Endothelial cell of umbilical vein (primary cell): ENCODE measurements at regions of chr14 and their contacts with region 1.

Region 1: GRCh38 chr14:52729925-52730667 is at the start of gene STYX:
- DNase-seq: peak; percentile 99
- H3K4me3 ChIP-seq: peak within 1 kb of the TSS; percentile 50 to 98 (median 88)
- H3K27ac ChIP-seq: peak within 1 kb of the TSS; percentile 29
- H3K4me1 ChIP-seq: peaks cover 3% of the 10 kb centered on the region
- H3K27me3 ChIP-seq: no peaks in the 10 kb centered on the region
- CTCF ChIP-seq: no peak
- POLR2A ChIP-seq: peak; percentile 78
- total RNA-seq, gene STYX: 21.0 and 21.3 TPM in 2 replicates

Region 2: DNA sequence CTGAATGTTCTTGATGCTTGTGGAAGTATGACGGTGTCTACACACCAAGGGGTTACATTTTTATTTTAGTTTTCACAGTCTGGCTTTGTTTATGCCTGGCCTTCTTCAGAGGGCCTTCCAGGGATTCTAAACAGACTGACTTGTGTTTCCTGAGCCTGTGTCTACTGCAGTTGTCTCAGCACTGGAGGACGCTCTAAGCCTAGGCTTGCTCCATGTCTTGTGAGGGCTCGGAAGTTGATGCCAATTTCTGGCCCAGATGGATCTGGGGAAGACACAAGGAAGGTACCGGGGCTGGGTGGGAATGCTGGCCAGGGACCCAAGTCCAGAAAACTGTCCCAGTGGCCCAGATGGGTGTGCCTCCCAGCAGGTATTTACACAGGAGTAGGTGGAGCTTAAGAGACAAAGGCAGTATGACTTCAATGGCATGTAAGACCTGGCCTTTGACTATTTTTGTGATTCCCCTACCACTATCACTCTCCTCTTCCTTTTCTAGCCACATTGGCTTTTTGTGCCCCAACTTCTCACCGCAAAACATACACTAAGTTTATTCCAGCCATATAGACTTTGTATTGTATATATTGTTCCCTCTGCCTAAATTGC is 120.6 kb before region 1 on chr14:
- CTCF ChIA-PET with region 1: no interaction called
- POLR2A ChIA-PET with region 1: no interaction called
- dilution Hi-C with region 1: no loop called
- intact Hi-C with region 1: no loop called
- DNase-seq: no peak
- H3K4me3 ChIP-seq: no peak overlapping the region
- H3K27ac ChIP-seq: no peak overlapping the region
- H3K4me1 ChIP-seq: no peaks in the 10 kb centered on the region
- H3K27me3 ChIP-seq: no peaks in the 10 kb centered on the region
- CTCF ChIP-seq: no peak
- POLR2A ChIP-seq: no peak

Region 3: GRCh38 chr14:52769887-52770286 is 39.8 kb after region 1 on chr14:
- CTCF ChIA-PET with region 1: no interaction called
- POLR2A ChIA-PET with region 1: no interaction called
- dilution Hi-C with region 1: no loop called
- intact Hi-C with region 1: loop called (anchors 5 kb)
- DNase-seq: peak; percentile 47
- H3K4me3 ChIP-seq: no peak overlapping the region
- H3K27ac ChIP-seq: peak overlapping the region; percentile 63
- H3K4me1 ChIP-seq: peaks cover 17% of the 10 kb centered on the region
- H3K27me3 ChIP-seq: no peaks in the 10 kb centered on the region
- CTCF ChIP-seq: no peak
- POLR2A ChIP-seq: no peak

Region 4: GRCh38 chr14:52852810-52853523 is 122.9 kb after region 1 on chr14:
- CTCF ChIA-PET with region 1: no interaction called
- POLR2A ChIA-PET with region 1: no interaction called
- dilution Hi-C with region 1: no loop called
- intact Hi-C with region 1: no loop called
- DNase-seq: peak; percentile 58
- H3K4me3 ChIP-seq: no peak overlapping the region
- H3K27ac ChIP-seq: no peak overlapping the region
- H3K4me1 ChIP-seq: peaks cover 9% of the 10 kb centered on the region
- H3K27me3 ChIP-seq: no peaks in the 10 kb centered on the region
- CTCF ChIP-seq: no peak
- POLR2A ChIP-seq: no peak